HEK293 (cell line): ENCODE measurements at regions of chr22 and their contacts with region 1.

Region 1: DNA sequence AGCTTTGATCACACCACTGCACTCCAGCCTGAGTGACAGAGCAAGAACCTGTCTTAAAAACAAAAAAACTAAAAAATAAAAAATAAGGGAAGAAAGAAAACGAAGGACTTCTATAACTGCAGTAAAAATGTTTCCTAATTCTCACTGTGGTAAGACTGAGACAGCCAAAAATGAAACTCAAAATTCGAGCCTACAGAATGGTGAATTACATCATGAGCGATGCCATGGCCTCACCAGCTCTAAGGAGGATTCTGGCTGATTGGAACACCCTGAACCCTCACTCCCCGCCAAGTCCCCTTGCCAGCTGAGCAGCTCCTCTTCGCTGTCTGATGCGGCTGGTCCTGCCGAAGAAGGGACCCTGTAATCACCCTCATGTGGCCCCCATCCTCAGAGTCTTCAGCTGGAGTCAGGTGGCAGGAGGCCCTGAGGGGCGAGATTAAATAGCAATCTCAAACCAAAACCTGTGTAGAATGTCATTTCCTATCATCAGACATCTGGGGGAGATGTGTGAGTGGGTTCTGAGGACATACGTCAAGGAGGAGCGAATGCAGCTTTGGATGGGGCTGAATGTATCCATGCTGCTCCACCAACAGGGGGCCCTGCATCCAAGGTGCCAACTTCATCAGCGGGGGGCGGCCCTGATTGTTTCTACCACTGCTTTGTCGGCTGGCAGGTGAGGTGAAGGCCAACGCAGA is 29.2 kb downstream of the PDGFB start:
- H3K4me3 ChIP-seq: no peak overlapping the region
- H3K27ac ChIP-seq: no peak overlapping the region
- H3K4me1 ChIP-seq: no peaks in the 10 kb centered on the region
- CTCF ChIP-seq: peak; percentile 33; the same call in 1 of the 2 replicates

Region 2: DNA sequence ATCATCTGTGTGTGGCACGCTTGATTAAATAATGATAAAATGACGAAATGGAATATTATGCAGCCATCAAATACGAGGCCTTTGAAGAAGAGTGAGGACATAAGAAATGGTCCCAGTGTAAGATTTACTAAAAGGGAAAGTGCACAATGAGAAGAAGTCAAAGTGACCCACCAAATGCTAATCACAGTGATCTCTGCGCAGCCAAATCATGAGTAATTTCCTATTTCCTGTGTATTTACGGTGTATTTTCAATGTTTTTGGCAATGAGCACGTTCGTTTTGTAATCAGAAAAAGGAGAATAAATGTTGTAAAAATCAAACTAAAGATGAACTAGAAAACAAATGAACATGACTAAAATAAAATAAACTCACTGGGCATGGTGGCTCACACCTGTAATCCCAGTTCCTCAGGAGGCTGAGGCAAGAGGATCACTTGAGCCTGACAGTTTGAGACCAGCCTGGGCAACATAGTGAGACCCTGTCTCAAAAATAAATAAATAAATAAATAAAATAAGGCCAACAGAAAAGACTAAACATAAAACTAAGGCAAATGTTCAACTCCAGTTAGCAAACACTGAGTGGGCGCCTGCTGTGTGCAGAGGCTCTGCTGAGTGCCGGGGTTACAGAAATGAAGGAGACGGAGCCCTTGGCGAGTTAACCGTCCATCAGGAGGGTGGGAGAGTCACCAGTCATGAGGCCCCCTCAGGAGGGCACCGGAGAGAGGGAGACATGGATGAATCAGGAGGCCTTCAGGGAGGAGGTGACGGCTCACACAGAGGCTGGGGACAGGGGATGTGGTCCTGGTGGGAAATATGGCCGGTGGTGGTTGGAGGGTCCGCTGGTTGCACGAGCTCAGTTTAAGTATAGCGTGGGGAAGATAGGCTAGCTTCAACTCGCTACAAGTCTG is 37.1 kb before region 1 on chr22:
- CTCF ChIA-PET with region 1: interaction called, 10 read pairs
- POLR2A ChIA-PET with region 1: interaction called, 3 read pairs
- H3K4me3 ChIP-seq: no peak overlapping the region
- H3K27ac ChIP-seq: no peak overlapping the region
- H3K4me1 ChIP-seq: peaks cover 10% of the 10 kb centered on the region
- CTCF ChIP-seq: no peak

Region 3: GRCh38 chr22:39188809-39189208 is 26.8 kb before region 1 on chr22:
- CTCF ChIA-PET with region 1: no interaction called
- POLR2A ChIA-PET with region 1: no interaction called
- H3K4me3 ChIP-seq: no peak overlapping the region
- H3K27ac ChIP-seq: no peak overlapping the region
- H3K4me1 ChIP-seq: no peaks in the 10 kb centered on the region
- CTCF ChIP-seq: no peak

Region 4: GRCh38 chr22:39230261-39231196 is 15.0 kb after region 1 on chr22:
- CTCF ChIA-PET with region 1: interaction called, 11 read pairs
- POLR2A ChIA-PET with region 1: no interaction called
- H3K4me3 ChIP-seq: no peak overlapping the region
- H3K27ac ChIP-seq: no peak overlapping the region
- H3K4me1 ChIP-seq: no peaks in the 10 kb centered on the region; the same call in 1 of the 2 replicates
- CTCF ChIP-seq: no peak

Region 5: GRCh38 chr22:39520892-39521885 is 305.6 kb after region 1 on chr22:
- CTCF ChIA-PET with region 1: no interaction called
- POLR2A ChIA-PET with region 1: no interaction called
- H3K4me3 ChIP-seq: peak overlapping the region; percentile 95
- H3K27ac ChIP-seq: peak overlapping the region; percentile 95
- H3K4me1 ChIP-seq: 0 out of 2 replicates have a peak, but pooled peaks cover 5% of the 10 kb centered on the region
- CTCF ChIP-seq: no peak